Caco-2 (cell line): ENCODE measurements at regions of chr10 and their contacts with region 1.

Region 1: GRCh38 chr10:84537447-84537931 is 209.1 kb downstream of the CCSER2 start:
- DNase-seq: peak in 1 of 2 experiments; percentile 67
- H3K4me3 ChIP-seq: no peak overlapping the region
- H3K4me3 Mint-ChIP-seq: no peak overlapping the region
- H3K27ac Mint-ChIP-seq: no peak overlapping the region
- H3K4me1 ChIP-seq: no peaks in the 10 kb centered on the region
- H3K4me1 Mint-ChIP-seq: peaks cover 6% of the 10 kb centered on the region
- H3K27me3 ChIP-seq: no peaks in the 10 kb centered on the region
- H3K27me3 Mint-ChIP-seq: no peaks in the 10 kb centered on the region
- CTCF ChIP-seq: peak; percentile 58 to 86

Region 2: DNA sequence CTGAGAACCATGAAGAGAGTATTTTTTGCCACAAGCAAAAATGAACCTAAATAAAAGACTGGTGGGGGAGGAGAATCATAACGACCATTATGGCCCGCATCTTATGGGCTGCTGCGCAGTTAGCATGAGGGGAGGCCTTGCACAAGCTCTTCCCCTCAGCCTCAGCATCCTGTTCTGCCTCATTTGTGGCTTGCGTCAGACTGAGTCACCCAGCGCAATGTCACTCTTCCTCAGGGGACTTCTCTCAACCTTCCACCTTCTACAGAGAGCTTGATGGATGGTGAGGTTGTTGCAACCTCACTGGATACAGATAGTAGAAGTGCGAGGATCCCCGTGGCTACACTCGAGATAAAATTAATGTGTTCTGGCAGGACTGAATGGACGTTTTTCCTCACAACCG is 380.7 kb before region 1 on chr10:
- CTCF ChIA-PET with region 1: no interaction called
- POLR2A ChIA-PET with region 1: no interaction called
- intact Hi-C with region 1: loop called (anchors 5 kb)
- DNase-seq: no peak
- H3K4me3 ChIP-seq: no peak overlapping the region
- H3K4me3 Mint-ChIP-seq: no peak overlapping the region
- H3K27ac Mint-ChIP-seq: no peak overlapping the region
- H3K4me1 ChIP-seq: no peaks in the 10 kb centered on the region
- H3K4me1 Mint-ChIP-seq: no peaks in the 10 kb centered on the region
- H3K27me3 ChIP-seq: no peaks in the 10 kb centered on the region
- H3K27me3 Mint-ChIP-seq: no peaks in the 10 kb centered on the region
- CTCF ChIP-seq: no peak

Region 3: GRCh38 chr10:84264611-84265141 is 272.8 kb before region 1 on chr10:
- CTCF ChIA-PET with region 1: interaction called, 53 read pairs
- POLR2A ChIA-PET with region 1: no interaction called
- intact Hi-C with region 1: loop called (anchors 1 kb)
- DNase-seq: peak; percentile 63 to 75
- H3K4me3 ChIP-seq: no peak overlapping the region
- H3K4me3 Mint-ChIP-seq: no peak overlapping the region
- H3K27ac Mint-ChIP-seq: no peak overlapping the region
- H3K4me1 ChIP-seq: no peaks in the 10 kb centered on the region
- H3K4me1 Mint-ChIP-seq: peaks cover 13% of the 10 kb centered on the region
- H3K27me3 ChIP-seq: no peaks in the 10 kb centered on the region; the same call in 1 of the 2 replicates
- H3K27me3 Mint-ChIP-seq: peaks cover 4% of the 10 kb centered on the region
- CTCF ChIP-seq: peak; percentile 94 to 96

Region 4: GRCh38 chr10:84352251-84352842 is 185.1 kb before region 1 on chr10:
- CTCF ChIA-PET with region 1: interaction called, 4 read pairs
- POLR2A ChIA-PET with region 1: no interaction called
- intact Hi-C with region 1: loop called (anchors 1 kb)
- DNase-seq: peak; percentile 66 to 74
- H3K4me3 ChIP-seq: no peak overlapping the region
- H3K4me3 Mint-ChIP-seq: no peak overlapping the region
- H3K27ac Mint-ChIP-seq: no peak overlapping the region
- H3K4me1 ChIP-seq: no peaks in the 10 kb centered on the region
- H3K4me1 Mint-ChIP-seq: peaks cover 15% of the 10 kb centered on the region
- H3K27me3 ChIP-seq: no peaks in the 10 kb centered on the region
- H3K27me3 Mint-ChIP-seq: no peaks in the 10 kb centered on the region
- CTCF ChIP-seq: peak; percentile 63 to 77

Region 5: DNA sequence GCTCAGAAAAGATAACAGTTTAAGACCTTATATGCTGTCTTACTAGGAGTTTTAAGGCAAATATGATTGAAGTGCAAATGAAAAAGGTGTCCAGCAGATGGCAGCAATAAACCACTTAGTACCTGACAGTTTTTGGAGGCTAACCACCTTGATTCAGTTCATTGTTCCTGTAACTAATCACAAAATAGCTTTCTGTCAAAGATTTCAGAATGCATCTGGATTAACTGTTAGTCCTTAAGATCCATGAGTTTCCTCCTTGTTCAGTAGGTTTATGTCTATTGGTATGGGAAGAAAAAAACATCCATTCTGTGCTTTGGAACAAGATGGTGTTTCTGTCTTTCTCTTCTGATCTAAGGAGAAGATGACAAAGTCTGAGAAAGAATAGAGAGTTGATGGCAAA is 162.5 kb before region 1 on chr10:
- CTCF ChIA-PET with region 1: interaction called, 25 read pairs
- POLR2A ChIA-PET with region 1: no interaction called
- intact Hi-C with region 1: loop called (anchors 1 kb)
- DNase-seq: peak in 1 of 2 experiments; percentile 64
- H3K4me3 ChIP-seq: no peak overlapping the region
- H3K4me3 Mint-ChIP-seq: no peak overlapping the region
- H3K27ac Mint-ChIP-seq: no peak overlapping the region
- H3K4me1 ChIP-seq: peaks cover 4% of the 10 kb centered on the region; the same call in 1 of the 2 replicates
- H3K4me1 Mint-ChIP-seq: no peaks in the 10 kb centered on the region
- H3K27me3 ChIP-seq: no peaks in the 10 kb centered on the region
- H3K27me3 Mint-ChIP-seq: no peaks in the 10 kb centered on the region
- CTCF ChIP-seq: peak; percentile 61 to 75

Region 6: GRCh38 chr10:84429926-84430520 is 107.5 kb before region 1 on chr10:
- CTCF ChIA-PET with region 1: interaction called, 43 read pairs
- POLR2A ChIA-PET with region 1: no interaction called
- intact Hi-C with region 1: loop called (anchors 1 kb)
- DNase-seq: peak; percentile 79
- H3K4me3 ChIP-seq: no peak overlapping the region
- H3K4me3 Mint-ChIP-seq: no peak overlapping the region
- H3K27ac Mint-ChIP-seq: no peak overlapping the region
- H3K4me1 ChIP-seq: no peaks in the 10 kb centered on the region
- H3K4me1 Mint-ChIP-seq: peaks cover 8% of the 10 kb centered on the region
- H3K27me3 ChIP-seq: no peaks in the 10 kb centered on the region
- H3K27me3 Mint-ChIP-seq: no peaks in the 10 kb centered on the region
- CTCF ChIP-seq: peak; percentile 56 to 75